ENCODE measurements at regions of chr2 and their contacts with region 1.

Region 1: GRCh38 chr2:102082571-102083392 is 59.8 kb upstream of the IL1R1 start:
- DNase-seq: peak; percentile 79
- H3K4me3 Mint-ChIP-seq: peak overlapping the region; percentile 30
- H3K27ac Mint-ChIP-seq: peak overlapping the region; percentile 91
- H3K4me1 Mint-ChIP-seq: peaks cover 60% of the 10 kb centered on the region
- H3K27me3 Mint-ChIP-seq: no peaks in the 10 kb centered on the region

Region 2: GRCh38 chr2:101717071-101717845 is 365.5 kb before region 1 on chr2:
- CTCF ChIA-PET with region 1: no interaction called
- intact Hi-C with region 1: loop called (anchors 5 kb)
- DNase-seq: peak; percentile 75
- H3K4me3 Mint-ChIP-seq: peak overlapping the region; percentile 38
- H3K27ac Mint-ChIP-seq: peak overlapping the region; percentile 95
- H3K4me1 Mint-ChIP-seq: peaks cover 92% of the 10 kb centered on the region
- H3K27me3 Mint-ChIP-seq: no peaks in the 10 kb centered on the region

Region 3: DNA sequence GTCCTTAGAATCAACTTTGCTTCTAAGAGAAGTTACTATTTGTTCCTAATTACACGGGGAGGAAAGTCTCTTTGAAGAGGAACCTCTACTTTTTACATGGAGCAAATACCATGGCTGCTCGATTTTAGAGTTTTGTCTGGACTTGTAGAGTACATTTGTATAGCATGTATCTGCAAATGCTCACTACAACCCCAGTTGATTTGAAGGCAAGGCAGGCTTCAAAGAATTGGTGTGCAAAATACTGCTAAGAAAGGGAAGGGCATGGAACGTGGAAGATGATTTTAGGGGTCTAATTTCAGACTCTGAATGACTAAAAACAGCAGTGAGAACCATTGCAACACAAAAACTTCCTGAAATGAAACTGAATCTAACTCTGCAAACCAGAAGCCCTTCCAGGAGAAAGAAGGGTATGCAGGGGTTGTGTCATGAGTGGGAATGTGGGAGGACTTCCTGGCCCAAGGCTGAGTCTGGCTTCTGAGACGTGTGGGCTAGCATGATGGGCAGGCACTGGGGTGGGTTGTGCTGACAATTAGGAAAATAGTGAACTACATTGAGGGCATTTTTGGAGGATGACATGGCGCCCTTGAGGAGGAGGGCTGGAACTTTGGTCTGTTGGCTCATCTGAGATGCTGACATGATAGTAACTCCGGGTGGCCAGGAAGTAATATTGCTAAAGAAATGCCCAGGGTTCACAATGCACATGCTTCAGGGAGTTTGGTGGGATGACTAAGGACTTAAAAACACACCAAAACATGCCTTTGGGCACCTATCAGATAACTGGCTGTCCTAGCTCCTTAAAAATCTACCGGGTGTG is 110.0 kb before region 1 on chr2:
- CTCF ChIA-PET with region 1: no interaction called
- intact Hi-C with region 1: no loop called
- DNase-seq: no peak
- H3K4me3 Mint-ChIP-seq: no peak overlapping the region
- H3K27ac Mint-ChIP-seq: no peak overlapping the region
- H3K4me1 Mint-ChIP-seq: peaks cover 6% of the 10 kb centered on the region
- H3K27me3 Mint-ChIP-seq: no peaks in the 10 kb centered on the region

Region 4: DNA sequence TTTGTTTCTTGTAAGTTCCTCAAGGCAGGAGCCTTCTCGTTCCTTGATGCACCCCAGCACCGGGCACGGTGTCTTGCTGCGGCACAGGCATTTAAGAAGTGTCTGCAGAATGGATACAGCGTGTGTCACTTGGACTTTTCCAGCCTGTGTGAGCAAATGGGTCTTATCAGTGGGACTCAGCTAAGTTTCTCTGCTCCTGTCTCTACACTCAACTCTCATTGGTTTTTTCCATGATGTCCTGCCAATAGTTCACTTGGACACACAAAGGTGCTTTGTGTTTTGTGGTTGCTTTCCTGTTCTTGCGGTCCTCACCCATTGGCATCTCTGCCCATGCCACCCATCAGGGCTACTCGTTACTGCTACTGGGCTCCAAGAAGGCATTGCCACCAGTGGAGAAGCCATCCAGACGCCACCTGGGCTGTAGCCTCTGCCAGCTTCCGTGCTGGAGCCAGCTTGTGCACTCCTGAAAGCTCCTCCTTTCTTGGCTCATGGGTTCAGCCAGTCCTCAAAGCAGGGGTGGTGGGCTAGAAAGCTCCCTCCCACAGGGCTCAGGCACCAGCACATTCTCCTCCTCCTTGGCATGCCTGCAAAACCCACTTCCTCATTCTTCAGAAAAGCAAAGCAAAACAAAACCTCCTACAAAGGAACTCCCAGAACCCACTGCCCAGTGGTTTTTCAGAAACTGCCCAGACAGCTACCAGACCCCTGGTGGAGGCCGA is 49.6 kb before region 1 on chr2:
- CTCF ChIA-PET with region 1: no interaction called
- intact Hi-C with region 1: loop called (anchors 1 kb)
- DNase-seq: peak; percentile 22
- H3K4me3 Mint-ChIP-seq: no peak overlapping the region
- H3K27ac Mint-ChIP-seq: peak overlapping the region; percentile 48
- H3K4me1 Mint-ChIP-seq: peaks cover 40% of the 10 kb centered on the region
- H3K27me3 Mint-ChIP-seq: no peaks in the 10 kb centered on the region

Region 5: DNA sequence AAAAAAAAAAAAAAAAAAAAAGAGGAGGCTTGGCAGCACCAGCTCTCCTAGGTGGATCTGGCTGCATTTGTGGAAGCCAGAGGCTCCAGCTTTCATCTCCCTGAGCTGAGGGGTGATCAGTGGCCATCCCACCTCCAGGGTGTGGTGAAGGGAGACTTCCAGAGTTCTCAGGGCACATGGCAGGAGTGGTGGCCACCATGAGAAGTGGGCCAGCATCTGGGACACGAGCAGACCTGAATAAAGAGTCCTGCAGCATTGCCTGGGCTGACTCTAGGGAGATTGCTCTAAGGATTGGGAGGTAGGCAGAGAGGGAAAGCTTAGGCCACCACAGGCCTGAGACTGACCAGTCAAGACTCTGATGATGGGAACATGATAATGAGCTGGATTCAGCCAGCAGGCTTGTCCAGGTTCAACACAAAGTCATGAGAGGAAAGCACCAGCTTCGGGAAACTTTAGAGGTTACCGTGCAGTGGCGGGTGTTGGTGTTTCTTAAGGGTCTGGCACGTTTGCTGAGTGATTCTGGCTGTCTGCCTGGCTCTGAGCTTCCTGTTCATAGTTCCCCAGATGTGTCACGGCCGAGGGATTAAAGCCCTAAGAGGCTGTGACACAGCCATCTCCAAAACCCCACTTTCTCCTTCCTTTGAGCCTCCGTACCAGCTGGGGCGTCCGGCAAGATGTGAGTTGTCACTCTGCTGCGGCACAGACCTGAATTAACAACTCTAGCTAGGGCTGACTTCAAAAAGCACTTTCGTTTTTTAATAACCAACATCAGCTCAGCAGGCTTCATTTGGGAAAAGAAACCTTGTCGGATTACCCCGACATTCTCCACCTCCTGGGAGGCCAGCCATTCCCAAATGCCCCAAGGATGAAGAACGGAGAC is 21.4 kb after region 1 on chr2:
- CTCF ChIA-PET with region 1: interaction called, 8 read pairs
- intact Hi-C with region 1: loop called (anchors 1 kb)
- DNase-seq: peak; percentile 96
- H3K4me3 Mint-ChIP-seq: peak overlapping the region; percentile 71
- H3K27ac Mint-ChIP-seq: peak overlapping the region; percentile 86
- H3K4me1 Mint-ChIP-seq: peaks cover 36% of the 10 kb centered on the region
- H3K27me3 Mint-ChIP-seq: peaks cover 2% of the 10 kb centered on the region

Region 6: DNA sequence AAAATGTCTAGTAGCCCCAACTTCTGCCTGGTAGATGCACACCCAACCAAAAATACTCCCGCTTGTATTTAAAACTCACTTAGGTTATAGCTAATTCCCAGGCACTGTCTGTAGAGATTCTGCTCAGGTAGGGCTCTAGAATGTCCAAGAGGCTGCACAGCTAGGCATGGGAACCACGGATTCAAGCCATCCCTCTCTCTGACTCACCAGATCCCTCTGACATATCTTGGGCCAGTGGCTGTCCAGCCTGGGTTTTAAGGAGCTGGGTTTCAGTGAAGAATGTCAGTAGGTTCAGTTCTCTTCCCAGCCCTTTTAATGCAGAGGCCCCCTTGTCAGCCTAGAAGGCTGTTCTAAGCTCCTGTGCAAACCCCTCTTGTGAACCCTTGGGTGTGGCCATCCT is 43.9 kb after region 1 on chr2:
- CTCF ChIA-PET with region 1: interaction called, 3 read pairs
- intact Hi-C with region 1: loop called (anchors 1 kb)
- DNase-seq: no peak
- H3K4me3 Mint-ChIP-seq: no peak overlapping the region
- H3K27ac Mint-ChIP-seq: peak overlapping the region; percentile 81
- H3K4me1 Mint-ChIP-seq: peaks cover 31% of the 10 kb centered on the region
- H3K27me3 Mint-ChIP-seq: peaks cover 3% of the 10 kb centered on the region

Region 7: GRCh38 chr2:102418421-102418961 is 335.7 kb after region 1 on chr2:
- CTCF ChIA-PET with region 1: no interaction called
- intact Hi-C with region 1: loop called (anchors 5 kb)
- DNase-seq: no peak
- H3K4me3 Mint-ChIP-seq: peak overlapping the region; percentile 75
- H3K27ac Mint-ChIP-seq: peak overlapping the region; percentile 92
- H3K4me1 Mint-ChIP-seq: peaks cover 57% of the 10 kb centered on the region
- H3K27me3 Mint-ChIP-seq: no peaks in the 10 kb centered on the region